ENCODE measurements at regions of chr11 and their contacts with region 1.

Region 1: DNA sequence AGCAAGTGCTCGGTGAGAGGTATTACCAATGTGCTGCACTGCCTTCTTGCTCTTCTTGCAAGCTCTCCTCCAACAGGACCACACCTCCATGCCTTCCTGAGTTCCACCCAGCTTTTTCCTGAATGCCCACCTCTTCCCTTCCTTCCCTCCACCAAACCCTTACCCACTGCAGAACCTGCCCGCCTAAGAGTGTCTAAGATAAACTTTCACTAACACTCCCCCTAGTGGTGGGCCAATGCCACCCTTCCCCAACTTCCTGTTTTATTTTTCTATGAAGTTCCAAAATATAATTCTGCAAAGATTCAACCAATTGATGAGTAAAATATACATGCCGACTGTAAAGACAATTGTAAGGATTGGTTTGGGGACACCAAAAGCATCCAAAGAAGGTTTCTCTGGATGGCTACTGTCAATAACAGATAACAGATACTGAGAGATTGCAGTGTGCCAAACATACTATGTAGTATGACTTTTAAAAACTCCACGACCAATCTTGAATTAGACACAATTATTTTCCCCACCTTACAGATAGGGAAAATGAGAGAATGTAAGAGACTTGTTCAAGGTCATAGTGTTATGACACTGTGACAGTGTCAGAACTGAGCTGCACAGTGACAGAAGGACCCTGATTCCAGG is 38.6 kb upstream of the BMAL1 start:
- DNase-seq: peak; percentile 55
- H3K4me3 Mint-ChIP-seq: no peak overlapping the region
- H3K27ac Mint-ChIP-seq: no peak overlapping the region
- H3K4me1 Mint-ChIP-seq: no peaks in the 10 kb centered on the region
- H3K27me3 Mint-ChIP-seq: peaks cover 14% of the 10 kb centered on the region

Region 2: GRCh38 chr11:13225038-13226001 is 13.7 kb before region 1 on chr11:
- CTCF ChIA-PET with region 1: interaction called, 10 read pairs
- POLR2A ChIA-PET with region 1: no interaction called
- intact Hi-C with region 1: no loop called
- DNase-seq: no peak
- H3K4me3 Mint-ChIP-seq: no peak overlapping the region
- H3K27ac Mint-ChIP-seq: no peak overlapping the region
- H3K4me1 Mint-ChIP-seq: peaks cover 4% of the 10 kb centered on the region
- H3K27me3 Mint-ChIP-seq: no peaks in the 10 kb centered on the region